Esophagus muscularis mucosa (tissue), 4 donors: ENCODE measurements at regions of chr7 and their contacts with region 1.

Region 1: GRCh38 chr7:84194543-84195271 is at the start of gene SEMA3A:
- DNase-seq: no peak
- H3K4me3 ChIP-seq: peak within 1 kb of the TSS; percentile 56 to 67 (median 62)
- H3K27ac ChIP-seq: peak within 1 kb of the TSS; percentile 77 to 83 (median 81)
- H3K4me1 ChIP-seq: peaks cover 8 to 37% (median 17%) of the 10 kb centered on the region in 4 donors
- H3K27me3 ChIP-seq: no peaks in the 10 kb centered on the region
- CTCF ChIP-seq: peak; percentile 22 to 29 (median 27)
- EP300 ChIP-seq: no peak
- POLR2A ChIP-seq: no peak
- total RNA-seq, gene SEMA3A: 27.8 to 39.0 (median 34.5) TPM

Region 2: DNA sequence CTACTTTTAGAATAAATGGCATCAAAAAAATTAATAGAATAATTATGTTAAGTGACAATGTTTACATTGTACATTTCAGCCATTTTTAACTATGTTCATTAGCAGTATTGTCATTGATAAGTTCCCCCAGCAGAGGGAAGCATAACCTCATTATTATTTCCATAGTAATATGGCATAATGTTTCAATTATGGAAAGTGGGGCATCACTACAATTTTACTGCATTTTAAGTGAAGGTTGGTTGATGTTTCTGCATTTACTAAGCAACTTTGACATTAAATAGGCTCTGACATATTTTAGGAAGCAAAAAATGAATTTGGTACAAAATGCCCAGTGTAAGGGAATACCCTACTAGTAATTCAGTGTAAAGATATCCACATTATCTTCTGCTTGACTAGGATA is 218.4 kb before region 1 on chr7:
- intact Hi-C with region 1: loop called (anchors 5 kb)
- DNase-seq: no peak
- H3K4me3 ChIP-seq: no peak overlapping the region
- H3K27ac ChIP-seq: no peak overlapping the region
- H3K4me1 ChIP-seq: peaks cover 0 to 7% (median 2%) of the 10 kb centered on the region in 4 donors
- H3K27me3 ChIP-seq: no peaks in the 10 kb centered on the region
- CTCF ChIP-seq: peak; percentile 67 to 69 (median 69)
- EP300 ChIP-seq: no peak
- POLR2A ChIP-seq: no peak

Region 3: DNA sequence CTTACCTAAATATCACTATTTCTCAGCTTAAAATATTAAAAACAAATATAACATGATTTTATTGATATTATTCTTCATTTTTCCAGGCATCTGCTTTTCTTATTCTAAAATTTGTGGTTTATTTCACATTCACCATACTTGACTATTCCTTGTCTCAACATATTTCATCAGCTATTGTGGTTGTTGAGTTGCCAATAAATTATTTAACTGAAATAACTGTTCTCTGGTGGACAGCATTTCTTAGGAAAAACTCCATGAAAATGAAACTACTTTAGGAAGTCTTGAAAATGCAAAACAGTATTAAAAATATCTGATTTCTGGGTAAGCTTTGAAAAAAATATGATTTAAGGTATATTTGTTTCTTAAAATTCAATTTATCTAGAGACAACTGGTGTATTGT is 122.8 kb after region 1 on chr7:
- intact Hi-C with region 1: loop called (anchors 2 kb)
- DNase-seq: no peak
- H3K4me3 ChIP-seq: peak overlapping the region in 1 of 4 donors; percentile 48
- H3K27ac ChIP-seq: peak overlapping the region in 1 of 4 donors; percentile 63
- H3K4me1 ChIP-seq: no peaks in the 10 kb centered on the region
- H3K27me3 ChIP-seq: no peaks in the 10 kb centered on the region
- CTCF ChIP-seq: no peak
- EP300 ChIP-seq: no peak
- POLR2A ChIP-seq: no peak

Region 4: DNA sequence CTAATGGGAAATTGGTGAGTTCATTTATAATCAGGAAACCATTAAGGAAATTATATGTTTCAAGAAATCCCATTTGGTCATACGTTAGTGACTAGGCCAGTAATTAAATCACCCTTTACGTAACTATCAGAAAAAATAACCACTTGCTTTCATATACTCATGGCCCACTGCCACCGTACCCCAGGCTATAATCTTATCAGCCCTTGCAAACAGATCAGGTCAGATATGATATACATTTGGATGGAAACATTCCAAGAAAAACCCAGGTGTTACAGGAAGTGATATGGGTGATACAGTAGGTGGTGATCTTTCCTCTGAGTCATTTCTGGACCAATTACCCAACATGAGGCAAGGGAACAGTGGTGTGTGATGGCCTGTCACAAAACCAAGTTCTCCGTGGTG is 480.9 kb after region 1 on chr7:
- intact Hi-C with region 1: no loop called
- DNase-seq: no peak
- H3K4me3 ChIP-seq: no peak overlapping the region
- H3K27ac ChIP-seq: no peak overlapping the region
- H3K4me1 ChIP-seq: peaks cover 0 to 30% (median 19%) of the 10 kb centered on the region in 4 donors
- H3K27me3 ChIP-seq: no peaks in the 10 kb centered on the region
- CTCF ChIP-seq: no peak
- EP300 ChIP-seq: no peak
- POLR2A ChIP-seq: no peak